B cell (primary cell): ENCODE measurements at regions of chr11 and their contacts with region 1.

Region 1: DNA sequence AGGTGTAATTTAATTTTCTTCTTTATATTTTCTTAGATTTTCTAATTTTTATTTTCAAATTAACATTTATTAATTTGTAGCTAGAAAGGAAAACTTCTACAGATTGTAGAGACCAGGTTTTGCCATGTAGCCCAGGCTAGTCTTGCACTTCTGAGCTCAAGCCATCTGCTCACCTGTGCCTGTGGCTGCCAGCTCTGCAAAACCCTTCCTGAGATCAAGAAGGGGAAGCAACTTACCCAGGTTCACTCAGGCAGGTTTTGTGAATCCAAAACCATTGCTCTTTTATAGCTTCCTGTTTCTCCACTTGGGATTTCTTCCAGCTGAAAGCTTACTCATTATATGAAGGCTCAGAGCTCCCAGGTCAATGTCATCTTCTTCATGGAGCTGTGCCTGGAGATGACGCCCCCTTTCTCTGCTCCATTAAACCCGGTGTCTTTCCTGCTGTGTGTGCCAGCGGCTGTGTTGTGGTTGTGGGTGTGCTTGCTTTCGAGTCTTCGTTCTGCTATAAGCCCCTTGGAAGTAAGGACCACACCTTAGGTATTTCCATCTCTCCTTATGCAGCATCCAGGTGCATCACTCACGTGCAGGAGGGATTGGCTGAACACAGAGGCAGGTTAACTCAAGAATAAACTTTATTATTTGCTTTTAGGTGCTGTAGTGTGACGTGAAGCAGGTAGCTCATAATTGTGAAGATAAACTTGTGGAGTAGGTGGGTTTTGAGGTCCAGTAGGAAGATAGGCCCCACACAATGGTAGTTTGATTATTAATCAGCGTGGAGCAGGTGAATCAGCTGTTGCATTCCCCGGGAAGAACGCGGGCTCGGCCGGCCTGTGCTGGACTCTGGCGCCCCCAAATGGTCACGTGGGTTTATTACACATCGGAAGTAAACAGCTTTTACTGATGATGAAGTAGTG is 42.2 kb upstream of the INCENP start:
- DNase-seq: peak; percentile 84
- ATAC-seq: peak; percentile 92
- H3K4me3 ChIP-seq: peak overlapping the region in 4 of 5 experiments; percentile 12 to 47 (median 23)
- H3K4me3 Mint-ChIP-seq: peak overlapping the region; percentile 75
- H3K27ac ChIP-seq: no peak overlapping the region
- H3K27ac Mint-ChIP-seq: no peak overlapping the region
- H3K4me1 ChIP-seq: peaks cover 6 to 9% of the 10 kb centered on the region in 2 donors
- H3K4me1 Mint-ChIP-seq: peaks cover 9% of the 10 kb centered on the region
- H3K27me3 ChIP-seq: peaks cover 0 to 3% (median 0%) of the 10 kb centered on the region in 4 experiments
- H3K27me3 Mint-ChIP-seq: no peaks in the 10 kb centered on the region
- CTCF ChIP-seq: peak; percentile 98

Region 2: GRCh38 chr11:61816736-61817455 is 264.7 kb before region 1 on chr11 and contains the start of gene FADS1:
- CTCF ChIA-PET with region 1: interaction called, 11 read pairs
- POLR2A ChIA-PET with region 1: no interaction called
- intact Hi-C with region 1: no loop called
- DNase-seq: peak; percentile 83
- ATAC-seq: peak; percentile 65
- H3K4me3 ChIP-seq: peak within 1 kb of the TSS; percentile 56 to 77 (median 70)
- H3K4me3 Mint-ChIP-seq: peak within 1 kb of the TSS; percentile 96
- H3K27ac ChIP-seq: no peak within 1 kb of the TSS
- H3K27ac Mint-ChIP-seq: peak within 1 kb of the TSS; percentile 83
- H3K4me1 ChIP-seq: peaks cover 9 to 24% of the 10 kb centered on the region in 2 donors
- H3K4me1 Mint-ChIP-seq: peaks cover 15% of the 10 kb centered on the region
- H3K27me3 ChIP-seq: peaks cover 0 to 17% (median 4%) of the 10 kb centered on the region in 4 experiments
- H3K27me3 Mint-ChIP-seq: no peaks in the 10 kb centered on the region
- CTCF ChIP-seq: peak; percentile 53
- total RNA-seq, gene FADS1: 14.8 and 15.6 TPM in 2 replicates

Region 3: GRCh38 chr11:61899146-61899841 is 182.3 kb before region 1 on chr11:
- CTCF ChIA-PET with region 1: interaction called, 424 read pairs
- POLR2A ChIA-PET with region 1: interaction called, 14 read pairs
- intact Hi-C with region 1: loop called (anchors 1 kb)
- DNase-seq: peak; percentile 96
- ATAC-seq: peak; percentile 96
- H3K4me3 ChIP-seq: no peak overlapping the region
- H3K4me3 Mint-ChIP-seq: peak overlapping the region; percentile 41
- H3K27ac ChIP-seq: peak overlapping the region in 1 of 2 donors; percentile 33
- H3K27ac Mint-ChIP-seq: peak overlapping the region; percentile 85
- H3K4me1 ChIP-seq: peaks cover 21 to 31% of the 10 kb centered on the region in 2 donors
- H3K4me1 Mint-ChIP-seq: peaks cover 26% of the 10 kb centered on the region
- H3K27me3 ChIP-seq: peaks cover 0 to 3% (median 2%) of the 10 kb centered on the region in 4 experiments
- H3K27me3 Mint-ChIP-seq: peaks cover 4% of the 10 kb centered on the region
- CTCF ChIP-seq: peak; percentile 100

Region 4: DNA sequence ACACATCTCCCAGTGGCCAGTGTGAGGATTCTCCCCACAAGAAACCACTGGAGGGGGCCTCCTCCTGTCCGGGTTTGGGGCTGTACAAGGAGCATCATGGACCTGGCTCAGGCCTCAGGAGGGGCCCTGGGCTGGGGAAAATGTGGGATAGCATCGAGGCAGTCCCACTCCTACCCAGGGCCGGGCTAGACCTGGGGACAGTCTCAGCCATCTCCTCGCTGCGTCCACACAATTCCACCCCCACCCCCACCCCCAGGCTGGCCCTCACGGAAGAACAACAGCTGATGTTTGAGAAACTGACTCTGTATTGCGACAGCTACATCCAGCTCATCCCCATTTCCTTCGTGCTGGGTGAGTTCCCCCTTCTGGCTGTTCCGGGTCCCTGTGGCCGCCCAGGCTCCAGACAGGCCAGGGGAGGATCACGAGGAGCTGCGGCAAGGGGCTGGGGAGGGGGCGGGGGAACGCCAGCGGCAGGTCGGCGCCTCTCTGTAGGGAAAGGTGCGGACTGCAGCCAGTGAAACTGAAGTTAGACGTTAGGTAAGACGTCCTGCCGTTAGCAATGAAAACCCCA is 126.7 kb before region 1 on chr11:
- CTCF ChIA-PET with region 1: interaction called, 203 read pairs
- POLR2A ChIA-PET with region 1: no interaction called
- intact Hi-C with region 1: no loop called
- DNase-seq: peak; percentile 48
- ATAC-seq: peak; percentile 34
- H3K4me3 ChIP-seq: peak overlapping the region; percentile 13 to 55 (median 38)
- H3K4me3 Mint-ChIP-seq: peak overlapping the region; percentile 76
- H3K27ac ChIP-seq: no peak overlapping the region
- H3K27ac Mint-ChIP-seq: peak overlapping the region; percentile 59
- H3K4me1 ChIP-seq: peaks cover 16 to 17% of the 10 kb centered on the region in 2 donors
- H3K4me1 Mint-ChIP-seq: peaks cover 24% of the 10 kb centered on the region
- H3K27me3 ChIP-seq: peaks cover 0 to 24% (median 10%) of the 10 kb centered on the region in 4 experiments
- H3K27me3 Mint-ChIP-seq: no peaks in the 10 kb centered on the region
- CTCF ChIP-seq: no peak

Region 5: DNA sequence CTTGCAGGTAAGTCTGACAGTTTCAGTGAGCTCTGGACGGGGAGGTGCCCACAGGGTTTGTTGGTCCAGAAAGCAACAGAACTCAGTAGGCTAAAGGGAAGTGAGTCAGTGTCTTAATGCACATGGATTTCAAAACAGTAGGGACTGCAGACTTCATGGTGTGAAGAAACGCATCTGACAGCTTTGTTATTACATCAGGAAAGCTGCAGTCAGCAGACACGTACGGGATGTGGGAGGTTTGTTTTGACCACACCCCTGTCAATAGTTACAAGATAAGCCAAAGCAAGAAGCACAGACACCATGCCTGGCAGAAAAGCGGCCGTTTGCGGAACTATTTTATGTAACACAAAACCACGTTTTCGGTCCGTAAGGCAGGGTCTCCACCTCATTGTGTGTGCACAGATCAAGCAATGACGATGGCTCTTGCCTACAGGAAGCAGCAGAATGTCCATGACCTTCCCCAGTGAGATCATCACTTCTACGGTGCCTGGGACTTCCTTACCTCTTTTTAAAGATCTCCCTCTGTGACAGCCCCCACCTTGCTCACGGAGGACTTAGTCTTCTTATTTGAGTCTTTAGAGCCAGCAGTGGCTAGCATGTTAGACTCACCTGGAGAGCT is 56.0 kb before region 1 on chr11:
- CTCF ChIA-PET with region 1: interaction called, 15 read pairs
- POLR2A ChIA-PET with region 1: no interaction called
- intact Hi-C with region 1: no loop called
- DNase-seq: peak; percentile 93
- ATAC-seq: peak; percentile 83
- H3K4me3 ChIP-seq: peak overlapping the region in 3 of 5 experiments; percentile 6 to 30 (median 12)
- H3K4me3 Mint-ChIP-seq: peak overlapping the region; percentile 56
- H3K27ac ChIP-seq: peak overlapping the region; percentile 75 to 79
- H3K27ac Mint-ChIP-seq: peak overlapping the region; percentile 87
- H3K4me1 ChIP-seq: peaks cover 15 to 19% of the 10 kb centered on the region in 2 donors
- H3K4me1 Mint-ChIP-seq: peaks cover 23% of the 10 kb centered on the region
- H3K27me3 ChIP-seq: peaks cover 0 to 4% (median 0%) of the 10 kb centered on the region in 4 experiments
- H3K27me3 Mint-ChIP-seq: peaks cover 3% of the 10 kb centered on the region
- CTCF ChIP-seq: no peak

Region 6: DNA sequence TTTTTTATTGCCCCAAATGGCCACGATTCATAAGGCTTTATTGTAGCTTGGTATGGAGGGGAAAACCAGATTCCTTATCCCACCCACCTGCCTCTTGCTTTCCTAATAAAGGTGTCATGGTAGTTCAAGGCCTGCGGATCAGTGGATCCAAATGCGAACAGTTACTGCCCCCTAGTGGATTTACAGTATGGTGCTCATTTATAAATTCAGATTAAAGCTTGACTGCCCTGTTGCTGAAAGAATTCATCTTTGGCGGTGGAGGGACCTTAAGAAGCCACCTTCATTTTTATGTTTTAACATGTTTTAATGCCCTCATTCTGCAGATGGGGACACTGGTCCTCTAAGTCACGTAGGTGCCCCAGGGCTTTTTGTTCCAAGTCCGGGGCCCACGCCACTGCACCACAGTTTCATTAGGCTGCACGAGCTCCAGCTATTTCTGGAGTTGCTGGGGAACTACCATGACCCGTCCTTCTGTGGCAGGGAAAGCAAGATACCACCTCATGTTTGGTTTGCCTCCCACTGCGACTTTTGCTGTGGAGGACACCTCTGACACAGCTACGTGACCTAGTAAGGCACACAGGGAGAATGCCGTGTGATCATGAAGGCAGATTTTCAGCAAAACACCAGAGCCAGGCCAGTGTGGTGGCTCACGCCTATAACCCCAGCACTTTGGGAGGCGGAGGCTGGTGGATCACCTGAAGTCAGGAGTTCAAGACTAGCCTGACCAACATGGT is 26.5 kb after region 1 on chr11:
- CTCF ChIA-PET with region 1: interaction called, 104 read pairs
- POLR2A ChIA-PET with region 1: no interaction called
- intact Hi-C with region 1: no loop called
- DNase-seq: peak; percentile 80
- ATAC-seq: peak; percentile 63
- H3K4me3 ChIP-seq: no peak overlapping the region
- H3K4me3 Mint-ChIP-seq: no peak overlapping the region
- H3K27ac ChIP-seq: no peak overlapping the region
- H3K27ac Mint-ChIP-seq: no peak overlapping the region
- H3K4me1 ChIP-seq: peaks cover 0 to 12% of the 10 kb centered on the region in 2 donors
- H3K4me1 Mint-ChIP-seq: peaks cover 9% of the 10 kb centered on the region
- H3K27me3 ChIP-seq: peaks cover 0 to 3% (median under 1%) of the 10 kb centered on the region in 4 experiments
- H3K27me3 Mint-ChIP-seq: no peaks in the 10 kb centered on the region
- CTCF ChIP-seq: peak; percentile 83